ENCODE measurements at regions of chr15 and their contacts with region 1.

Region 1: GRCh38 chr15:89874926-89875564 is 18.7 kb downstream of the AP3S2 start:
- DNase-seq: peak; percentile 82
- ATAC-seq: peak; percentile 93
- H3K4me3 ChIP-seq: no peak overlapping the region
- H3K27ac ChIP-seq: peak overlapping the region; percentile 52
- H3K4me1 ChIP-seq: peaks cover 8% of the 10 kb centered on the region; the same call in 1 of the 2 replicates
- H3K27me3 ChIP-seq: no peaks in the 10 kb centered on the region
- CTCF ChIP-seq: peak; percentile 95

Region 2: GRCh38 chr15:89740137-89740536 is 134.9 kb before region 1 on chr15:
- CTCF ChIA-PET with region 1: interaction called, 6 read pairs
- POLR2A ChIA-PET with region 1: no interaction called
- intact Hi-C with region 1: loop called (anchors 1 kb)
- DNase-seq: peak; percentile 91
- ATAC-seq: peak; percentile 87
- H3K4me3 ChIP-seq: no peak overlapping the region; the same call in 1 of the 2 replicates
- H3K27ac ChIP-seq: no peak overlapping the region
- H3K4me1 ChIP-seq: 0 out of 2 replicates have a peak, but pooled peaks cover 3% of the 10 kb centered on the region
- H3K27me3 ChIP-seq: no peaks in the 10 kb centered on the region
- CTCF ChIP-seq: peak; percentile 85

Region 3: DNA sequence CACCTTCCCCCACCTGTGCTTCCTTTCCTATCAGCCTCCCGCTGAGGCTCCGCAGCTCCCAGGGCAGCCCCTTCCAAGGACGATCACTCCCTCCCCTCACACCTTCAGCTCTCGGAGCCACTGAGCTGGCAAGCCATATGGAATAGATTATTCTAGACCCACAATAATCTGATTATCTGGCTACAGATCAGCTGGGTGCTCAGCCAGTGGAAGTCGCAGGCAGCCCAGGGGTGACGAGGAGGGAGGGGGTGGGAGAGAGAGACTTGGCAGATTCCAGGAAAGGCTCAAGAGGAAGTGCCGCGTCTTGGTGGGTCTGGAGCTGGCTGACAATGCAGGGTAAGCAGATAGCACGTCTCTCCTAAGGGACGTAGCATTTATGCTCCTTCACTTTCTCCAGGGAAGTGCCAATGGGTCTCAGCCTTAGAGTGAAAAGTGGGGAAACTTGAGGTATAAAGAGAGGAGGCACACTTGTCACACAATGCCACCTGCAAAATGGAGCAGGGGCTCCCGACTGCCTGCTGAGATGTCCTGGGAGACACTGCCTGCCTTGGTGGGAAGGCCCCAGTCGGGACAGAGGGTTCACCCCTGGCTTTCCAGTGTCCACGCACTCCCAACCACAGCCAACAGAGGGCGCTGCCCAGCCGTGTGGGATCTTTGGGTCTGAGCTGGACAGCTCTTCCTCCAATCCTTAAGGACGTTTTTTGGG is 114.6 kb before region 1 on chr15:
- CTCF ChIA-PET with region 1: interaction called, 34 read pairs
- POLR2A ChIA-PET with region 1: interaction called, 11 read pairs
- intact Hi-C with region 1: loop called (anchors 1 kb)
- DNase-seq: peak; percentile 93
- ATAC-seq: peak; percentile 74
- H3K4me3 ChIP-seq: no peak overlapping the region
- H3K27ac ChIP-seq: peak overlapping the region; percentile 98
- H3K4me1 ChIP-seq: peaks cover 35% of the 10 kb centered on the region
- H3K27me3 ChIP-seq: no peaks in the 10 kb centered on the region
- CTCF ChIP-seq: peak; percentile 94

Region 4: GRCh38 chr15:89847101-89847500 is 27.9 kb before region 1 on chr15:
- CTCF ChIA-PET with region 1: interaction called, 19 read pairs
- POLR2A ChIA-PET with region 1: interaction called, 5 read pairs
- intact Hi-C with region 1: no loop called
- DNase-seq: no peak
- ATAC-seq: no peak
- H3K4me3 ChIP-seq: no peak overlapping the region
- H3K27ac ChIP-seq: peak overlapping the region; percentile 100
- H3K4me1 ChIP-seq: peaks cover 80% of the 10 kb centered on the region
- H3K27me3 ChIP-seq: no peaks in the 10 kb centered on the region
- CTCF ChIP-seq: no peak

Region 5: GRCh38 chr15:90071208-90071807 is 196.3 kb after region 1 on chr15:
- CTCF ChIA-PET with region 1: interaction called, 11 read pairs
- POLR2A ChIA-PET with region 1: no interaction called
- intact Hi-C with region 1: no loop called
- DNase-seq: peak; percentile 84
- ATAC-seq: peak; percentile 89
- H3K4me3 ChIP-seq: no peak overlapping the region
- H3K27ac ChIP-seq: no peak overlapping the region
- H3K4me1 ChIP-seq: peaks cover 13% of the 10 kb centered on the region
- H3K27me3 ChIP-seq: no peaks in the 10 kb centered on the region
- CTCF ChIP-seq: peak; percentile 82

Measured in PC-3 (cell line).